Endothelial cell of umbilical vein (primary cell): ENCODE measurements at regions of chr1 and their contacts with region 1.

Region 1: DNA sequence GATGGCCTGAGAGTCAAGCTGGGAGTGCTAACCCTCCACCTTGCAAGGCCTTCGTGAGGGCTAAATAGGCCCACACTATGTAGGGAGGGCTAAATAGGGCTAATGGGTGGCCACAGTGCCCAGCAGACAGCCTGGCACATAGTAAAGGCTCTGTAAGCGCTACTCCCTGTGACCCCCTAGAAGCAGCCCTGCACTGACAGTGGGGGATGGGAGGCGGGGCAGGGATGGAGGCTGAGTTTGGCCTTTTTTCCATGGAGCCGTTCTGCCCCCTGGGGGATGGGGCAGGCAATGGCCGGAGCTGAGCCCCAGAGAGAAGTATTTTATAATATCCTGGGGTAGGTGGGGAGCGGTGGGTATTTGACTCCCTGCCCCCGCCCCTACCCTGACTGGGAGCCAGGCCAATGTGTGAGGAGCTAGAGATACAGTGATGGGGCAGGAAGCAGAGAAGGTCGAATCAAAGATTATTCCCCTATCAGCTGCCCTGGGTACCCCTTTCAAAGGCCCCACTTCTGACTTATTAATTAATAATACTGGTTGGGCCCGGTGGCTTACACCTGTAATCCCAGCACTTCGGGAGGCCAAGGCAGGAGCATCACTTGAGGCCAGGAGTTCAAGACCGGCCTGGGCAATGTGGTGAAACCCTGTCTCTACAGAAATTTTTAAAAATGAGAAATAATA is 42.3 kb downstream of the LACTBL1 start:
- DNase-seq: peak; percentile 49
- H3K4me3 ChIP-seq: no peak overlapping the region
- H3K27ac ChIP-seq: no peak overlapping the region
- H3K4me1 ChIP-seq: no peaks in the 10 kb centered on the region
- H3K27me3 ChIP-seq: no peaks in the 10 kb centered on the region
- CTCF ChIP-seq: peak; percentile 84 to 88
- POLR2A ChIP-seq: no peak

Region 2: DNA sequence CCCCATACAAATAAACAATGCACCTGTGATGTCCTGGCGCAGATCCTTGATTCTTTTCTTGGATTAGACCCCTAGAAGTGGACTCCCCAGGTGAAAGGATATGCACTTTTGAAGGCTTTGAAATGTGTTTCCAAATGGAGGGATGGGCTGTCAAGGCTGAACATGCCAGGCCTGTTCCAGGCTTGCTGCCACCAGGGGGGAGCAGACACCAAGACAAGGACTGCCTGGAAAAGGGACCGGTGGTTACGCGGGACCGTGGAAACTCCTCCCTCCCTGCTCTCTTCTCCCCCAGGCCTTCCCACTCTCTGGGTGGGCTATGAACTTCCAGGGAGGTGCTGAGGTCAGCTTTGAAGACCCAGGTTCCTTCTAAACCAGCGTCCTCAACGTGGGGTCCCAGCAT is 264.6 kb before region 1 on chr1:
- CTCF ChIA-PET with region 1: interaction called, 125 read pairs
- POLR2A ChIA-PET with region 1: no interaction called
- dilution Hi-C with region 1: no loop called
- intact Hi-C with region 1: loop called (anchors 1 kb)
- DNase-seq: peak; percentile 47
- H3K4me3 ChIP-seq: no peak overlapping the region
- H3K27ac ChIP-seq: no peak overlapping the region
- H3K4me1 ChIP-seq: no peaks in the 10 kb centered on the region
- H3K27me3 ChIP-seq: peaks cover 2 to 10% of the 10 kb centered on the region in 2 experiments
- CTCF ChIP-seq: peak; percentile 72 to 79
- POLR2A ChIP-seq: no peak

Region 3: DNA sequence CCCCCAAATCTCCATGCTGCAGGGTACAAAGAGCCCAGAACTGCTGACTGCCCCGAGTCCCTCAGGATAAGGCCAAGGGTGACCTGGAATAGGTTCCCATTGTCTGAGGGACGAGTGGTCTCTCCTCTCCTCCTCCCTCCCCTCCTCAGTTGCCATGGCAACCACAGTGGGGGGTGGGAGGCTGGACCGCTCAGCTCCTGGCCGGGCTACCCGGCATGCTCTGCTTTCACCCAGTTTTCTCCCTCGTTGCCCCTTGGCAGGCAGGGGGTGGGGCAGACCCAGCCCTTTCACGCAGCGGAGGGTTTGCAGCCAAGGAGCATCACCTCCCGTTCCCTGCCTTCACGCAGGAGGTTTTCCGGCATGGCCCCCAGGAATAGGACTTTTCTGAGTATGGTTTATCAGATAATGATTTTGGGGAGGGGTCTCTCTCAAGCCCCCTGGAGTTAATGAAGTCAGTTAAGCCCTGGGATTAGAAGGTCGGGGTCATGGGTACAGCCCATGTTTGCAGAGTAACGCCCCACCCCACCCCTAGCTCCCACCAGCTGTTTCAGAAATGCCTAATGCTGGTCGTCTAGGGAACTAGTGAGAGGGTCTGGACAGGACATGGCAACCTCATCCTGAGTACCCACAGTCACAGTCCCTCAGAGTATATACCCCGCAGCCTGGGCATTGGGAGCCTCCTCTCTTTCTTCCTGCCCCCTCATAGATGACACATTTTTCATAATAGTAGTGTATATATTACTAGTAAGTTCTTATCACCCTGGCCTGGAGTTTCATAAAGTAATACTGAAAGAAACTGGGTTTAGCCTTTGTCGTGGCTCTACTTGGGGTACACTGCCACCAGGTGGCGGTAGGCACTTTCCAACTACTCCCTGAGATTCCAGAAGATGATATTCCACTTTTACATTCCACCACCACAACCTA is 256.6 kb before region 1 on chr1:
- CTCF ChIA-PET with region 1: interaction called, 149 read pairs
- POLR2A ChIA-PET with region 1: no interaction called
- dilution Hi-C with region 1: no loop called
- intact Hi-C with region 1: loop called (anchors 1 kb)
- DNase-seq: peak; percentile 74
- H3K4me3 ChIP-seq: no peak overlapping the region
- H3K27ac ChIP-seq: no peak overlapping the region
- H3K4me1 ChIP-seq: peaks cover 10% of the 10 kb centered on the region
- H3K27me3 ChIP-seq: peaks cover 11 to 12% of the 10 kb centered on the region in 2 experiments
- CTCF ChIP-seq: peak; percentile 67 to 86
- POLR2A ChIP-seq: no peak

Region 4: GRCh38 chr1:22903113-22903512 is 27.3 kb before region 1 on chr1:
- CTCF ChIA-PET with region 1: interaction called, 10 read pairs
- POLR2A ChIA-PET with region 1: no interaction called
- dilution Hi-C with region 1: no loop called
- intact Hi-C with region 1: no loop called
- DNase-seq: no peak
- H3K4me3 ChIP-seq: no peak overlapping the region
- H3K27ac ChIP-seq: no peak overlapping the region
- H3K4me1 ChIP-seq: no peaks in the 10 kb centered on the region
- H3K27me3 ChIP-seq: no peaks in the 10 kb centered on the region
- CTCF ChIP-seq: no peak
- POLR2A ChIP-seq: no peak